ENCODE measurements at regions of chr3 and their contacts with region 1.

Region 1: DNA sequence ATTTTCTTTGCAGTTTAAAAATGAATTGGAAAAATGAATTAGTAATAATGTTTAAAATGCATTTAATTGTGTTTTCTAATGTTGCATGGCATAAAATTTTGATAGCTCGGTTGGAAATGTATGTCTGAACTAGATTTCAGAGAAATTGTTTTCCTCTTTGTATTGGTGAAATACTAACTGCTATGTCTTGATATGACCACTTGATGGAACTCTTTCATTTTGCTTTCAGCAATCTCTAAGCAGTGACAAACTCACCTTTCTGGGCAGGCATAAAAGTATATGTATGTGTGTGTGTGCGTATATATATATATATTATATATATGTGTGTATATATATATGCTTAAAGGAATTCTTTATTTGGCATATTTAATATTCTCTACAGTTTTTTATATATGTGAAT is 239.3 kb upstream of the ZNF717 start:
- DNase-seq: no peak
- H3K4me3 ChIP-seq: no peak overlapping the region
- H3K27ac ChIP-seq: no peak overlapping the region
- H3K27me3 ChIP-seq: no peaks in the 10 kb centered on the region
- CTCF ChIP-seq: peak; percentile 71

Region 2: DNA sequence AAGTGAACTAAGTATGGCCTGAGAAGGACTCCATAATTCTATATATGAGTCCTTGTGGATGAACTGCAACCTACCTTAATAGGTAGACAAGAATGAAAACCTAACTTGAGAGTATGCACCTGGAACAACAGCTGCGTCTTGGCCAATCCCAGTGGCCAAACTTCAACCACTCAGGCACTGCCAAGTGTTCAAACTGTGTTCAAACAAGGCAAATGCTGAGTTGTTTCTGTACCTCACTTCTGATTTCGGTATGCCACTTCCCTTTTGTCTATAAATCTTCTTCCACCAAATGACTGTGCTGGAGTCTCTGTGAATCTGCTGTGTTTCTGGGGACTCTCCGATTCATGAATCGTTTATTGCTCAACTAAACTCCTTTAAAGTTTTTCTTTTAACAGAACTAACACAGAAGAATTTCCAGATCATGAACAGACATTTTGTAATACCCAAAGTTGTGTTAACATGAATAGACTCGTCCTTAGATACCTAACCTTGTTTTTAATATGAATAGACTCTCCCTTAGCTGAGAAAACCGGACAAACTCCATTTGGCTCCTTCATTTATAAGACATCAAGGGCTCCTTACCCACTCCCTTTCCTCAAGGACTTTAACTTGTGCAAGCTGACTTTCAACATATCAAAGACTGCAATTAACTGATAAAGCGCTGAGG is 243.4 kb before region 1 on chr3:
- CTCF ChIA-PET with region 1: no interaction called
- POLR2A ChIA-PET with region 1: no interaction called
- DNase-seq: no peak
- H3K4me3 ChIP-seq: no peak overlapping the region
- H3K27ac ChIP-seq: no peak overlapping the region
- H3K27me3 ChIP-seq: no peaks in the 10 kb centered on the region
- CTCF ChIP-seq: no peak

Region 3: DNA sequence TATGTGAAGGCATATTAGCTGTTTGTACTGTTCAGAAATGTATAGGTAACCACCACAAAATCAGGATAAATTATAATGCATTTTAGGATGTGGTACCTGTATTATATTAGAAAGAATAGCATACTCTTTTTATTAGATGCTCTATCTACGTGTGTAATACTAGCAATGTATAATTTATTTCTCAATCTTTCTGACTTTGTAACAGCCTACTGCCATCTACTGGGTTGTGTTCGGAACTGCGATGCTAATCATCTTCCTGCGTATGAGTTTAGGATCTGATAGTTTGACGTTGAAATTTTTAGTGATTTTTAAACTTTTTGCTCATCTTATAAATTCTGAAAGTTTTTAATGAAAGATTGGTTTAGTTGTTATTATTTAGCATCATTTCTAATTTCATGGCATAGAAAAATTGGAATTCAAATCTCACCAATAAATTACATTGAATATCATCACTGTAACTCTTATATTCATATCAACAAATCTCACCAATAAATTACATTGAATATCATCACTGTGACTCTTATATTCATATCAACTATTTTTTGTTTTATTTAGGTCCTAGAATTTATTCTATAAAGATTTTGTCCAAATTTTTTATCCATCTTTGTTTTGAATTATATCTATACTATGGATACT is 83.4 kb after region 1 on chr3:
- CTCF ChIA-PET with region 1: interaction called, 14 read pairs
- POLR2A ChIA-PET with region 1: no interaction called
- DNase-seq: peak; percentile 24
- H3K4me3 ChIP-seq: no peak overlapping the region
- H3K27ac ChIP-seq: no peak overlapping the region
- H3K27me3 ChIP-seq: no peaks in the 10 kb centered on the region
- CTCF ChIP-seq: peak; percentile 93

Region 4: GRCh38 chr3:76570436-76571057 is 545.9 kb after region 1 on chr3:
- CTCF ChIA-PET with region 1: interaction called, 11 read pairs
- POLR2A ChIA-PET with region 1: no interaction called
- DNase-seq: no peak
- H3K4me3 ChIP-seq: no peak overlapping the region
- H3K27ac ChIP-seq: no peak overlapping the region
- H3K27me3 ChIP-seq: no peaks in the 10 kb centered on the region
- CTCF ChIP-seq: peak; percentile 78

Measured in AG04450 (cell line).